Activated CD4-positive, alpha-beta memory T cell treated with anti-CD3 and anti-CD28 coated beads, Interleukin-2, amount 10 ng/mL, durations not matched to agents 7 days and 5 days (primary cell): ENCODE measurements at regions of chr1 and their contacts with region 1.

Region 1: DNA sequence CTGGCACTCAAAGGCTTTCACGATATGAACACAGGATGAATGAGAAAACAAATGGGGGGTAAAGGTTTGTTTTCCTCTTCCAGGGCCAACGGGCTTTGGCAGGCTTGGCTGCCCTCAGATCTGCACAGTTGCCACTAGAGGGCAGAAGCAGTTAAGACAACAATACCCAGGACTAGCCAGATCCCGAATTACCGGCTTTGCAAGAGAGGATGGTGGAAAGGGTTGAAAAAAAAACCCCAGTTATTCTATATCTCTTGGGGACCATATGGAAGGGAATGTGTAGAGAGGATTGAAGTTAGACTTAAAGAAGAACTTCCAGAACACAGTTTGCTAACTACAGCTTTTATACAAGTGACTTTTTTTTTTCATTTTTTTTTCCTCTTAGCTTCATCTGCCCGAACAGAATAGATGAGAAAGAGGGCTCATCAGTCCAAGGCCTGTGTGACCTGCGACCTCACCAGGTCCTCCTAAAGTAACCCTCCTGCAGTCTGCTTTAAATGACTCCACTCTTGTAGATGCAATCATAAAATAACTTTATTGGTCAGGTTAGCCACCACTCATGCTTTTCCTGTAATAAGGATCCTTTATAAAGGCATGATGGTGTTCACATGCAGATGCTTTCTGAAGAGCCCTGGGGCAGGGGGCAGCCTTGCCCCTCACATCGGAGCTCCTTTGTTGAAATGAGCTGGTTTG is 10.7 kb downstream of the FMOD start:
- DNase-seq: peak; percentile 64
- H3K4me3 Mint-ChIP-seq: no peak overlapping the region
- H3K27ac Mint-ChIP-seq: no peak overlapping the region
- H3K4me1 Mint-ChIP-seq: peaks cover 25% of the 10 kb centered on the region
- H3K27me3 Mint-ChIP-seq: peaks cover 50% of the 10 kb centered on the region

Region 2: DNA sequence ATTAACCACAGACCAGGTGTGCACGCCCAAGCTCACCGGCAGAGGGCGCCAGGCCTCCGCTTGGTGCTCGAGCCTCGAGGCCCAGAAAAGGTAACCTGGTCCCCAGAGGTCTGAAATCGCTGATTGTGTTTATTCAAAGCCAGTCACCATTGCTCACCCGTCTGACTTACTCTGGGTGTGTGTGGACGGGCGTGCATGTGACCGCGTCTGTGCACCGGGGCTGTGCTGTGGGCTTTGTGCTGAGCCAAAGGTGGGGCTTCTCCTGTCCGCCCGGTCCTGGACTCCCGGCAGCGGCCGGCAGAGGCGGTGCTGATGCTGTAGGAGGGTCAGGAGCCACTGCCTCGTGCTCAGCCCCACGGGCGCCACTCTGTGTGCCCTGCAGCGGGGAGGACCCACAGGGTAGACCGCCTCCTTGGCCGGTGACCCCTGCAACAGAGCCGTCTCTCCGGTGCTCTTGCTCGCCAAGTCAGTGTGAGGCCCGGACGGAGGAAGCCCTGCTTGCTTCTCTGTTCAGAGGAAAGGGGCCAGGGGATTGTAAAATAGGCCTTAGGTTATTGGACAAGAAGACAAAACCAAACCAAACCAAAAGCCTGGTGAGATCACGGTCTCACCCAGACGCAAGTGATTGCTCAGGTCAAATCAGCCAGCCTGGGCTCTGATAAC is 66.9 kb before region 1 on chr1:
- CTCF ChIA-PET with region 1: interaction called, 512 read pairs
- POLR2A ChIA-PET with region 1: interaction called, 12 read pairs
- DNase-seq: peak; percentile 93
- H3K4me3 Mint-ChIP-seq: peak overlapping the region; percentile 38
- H3K27ac Mint-ChIP-seq: peak overlapping the region; percentile 49
- H3K4me1 Mint-ChIP-seq: peaks cover 65% of the 10 kb centered on the region
- H3K27me3 Mint-ChIP-seq: no peaks in the 10 kb centered on the region

Region 3: DNA sequence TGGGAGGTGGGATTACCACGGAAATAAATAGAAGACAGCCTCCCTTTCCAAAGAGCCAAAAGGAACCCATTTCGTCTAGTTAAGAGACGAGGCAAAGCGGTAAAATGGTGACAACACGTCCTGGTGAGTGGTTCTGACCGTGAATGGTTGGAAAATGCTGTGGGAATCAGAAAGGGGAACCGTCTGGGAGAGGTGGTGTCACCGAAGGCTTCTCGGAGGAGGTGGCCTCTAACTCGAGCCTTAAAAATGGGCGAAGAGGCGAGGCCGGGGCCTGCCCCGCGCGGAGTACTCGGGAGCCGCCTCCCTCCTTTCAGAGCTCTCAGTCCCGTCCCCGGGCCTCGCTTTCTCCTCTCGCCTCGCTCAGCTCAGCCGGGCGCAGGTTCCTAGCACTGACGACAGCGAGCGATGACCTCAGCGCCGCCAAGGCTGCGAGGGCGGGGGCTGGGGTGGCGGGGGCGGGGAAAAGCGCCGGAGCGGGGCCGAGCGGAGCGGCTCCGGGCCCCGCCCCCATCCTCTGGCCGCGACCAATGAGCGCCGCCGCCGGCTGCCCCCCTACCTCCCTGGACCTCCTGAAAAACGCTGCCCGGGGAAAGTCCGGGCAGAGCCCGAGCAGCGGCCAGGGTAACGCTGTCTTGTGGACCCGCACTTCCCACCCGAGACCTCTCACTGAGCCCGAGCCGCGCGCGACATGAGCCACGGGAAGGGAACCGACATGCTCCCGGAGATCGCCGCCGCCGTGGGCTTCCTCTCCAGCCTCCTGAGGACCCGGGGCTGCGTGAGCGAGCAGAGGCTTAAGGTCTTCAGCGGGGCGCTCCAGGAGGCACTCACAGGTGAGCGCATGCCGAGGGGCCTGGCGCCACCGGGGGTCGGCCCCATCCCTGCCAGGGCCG is 35.1 kb before region 1 on chr1 and contains the start of gene BTG2:
- CTCF ChIA-PET with region 1: interaction called, 99 read pairs
- POLR2A ChIA-PET with region 1: interaction called, 35 read pairs
- DNase-seq: peak; percentile 93
- H3K4me3 Mint-ChIP-seq: peak within 1 kb of the TSS; percentile 98
- H3K27ac Mint-ChIP-seq: peak within 1 kb of the TSS; percentile 92
- H3K4me1 Mint-ChIP-seq: peaks cover 68% of the 10 kb centered on the region
- H3K27me3 Mint-ChIP-seq: no peaks in the 10 kb centered on the region
- total RNA-seq, gene BTG2: 116 TPM

Region 4: DNA sequence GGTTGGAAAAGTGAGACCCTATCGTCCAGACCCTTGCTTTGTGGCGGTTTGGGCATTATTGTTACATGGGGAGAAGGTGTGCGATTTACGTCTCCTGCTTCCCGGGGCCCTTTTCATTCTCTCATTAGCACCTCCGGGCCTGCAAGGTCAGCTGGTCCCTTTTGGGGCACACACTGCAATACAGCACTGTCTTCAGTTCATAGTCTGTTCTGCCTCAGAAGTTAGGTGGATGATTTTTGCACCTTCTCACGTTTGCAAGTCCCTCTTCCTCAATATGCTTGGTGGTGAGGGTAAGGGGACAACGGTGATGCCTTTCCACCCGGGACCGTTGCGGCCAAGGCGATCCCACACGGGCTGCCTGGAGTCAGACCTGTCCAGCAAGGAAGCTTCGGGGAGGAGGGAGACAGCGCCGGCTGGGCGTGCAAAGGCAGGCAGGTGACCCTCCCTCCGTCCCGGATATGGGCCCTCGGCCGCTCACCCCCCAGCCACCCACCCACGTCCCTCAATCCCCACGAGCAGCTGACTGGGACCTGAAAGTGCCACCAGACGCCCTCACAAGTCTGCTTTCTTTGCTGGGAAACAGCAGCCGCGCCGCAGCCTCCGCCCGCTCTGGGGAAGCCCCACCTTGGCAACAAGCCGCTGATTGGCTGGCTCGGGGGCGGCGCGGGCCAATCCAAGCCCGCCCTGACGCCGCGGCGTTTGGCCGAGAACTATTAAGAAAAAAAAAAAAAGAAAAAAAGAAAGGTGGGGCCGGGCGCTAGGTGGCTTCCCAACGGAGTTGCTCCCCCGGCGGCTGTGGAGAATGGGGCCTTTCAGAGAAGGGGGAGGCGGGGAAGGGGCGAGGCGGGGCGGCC is 13.2 kb before region 1 on chr1:
- CTCF ChIA-PET with region 1: interaction called, 76 read pairs
- POLR2A ChIA-PET with region 1: interaction called, 48 read pairs
- DNase-seq: peak; percentile 95
- H3K4me3 Mint-ChIP-seq: peak overlapping the region; percentile 75
- H3K27ac Mint-ChIP-seq: peak overlapping the region; percentile 95
- H3K4me1 Mint-ChIP-seq: peaks cover 65% of the 10 kb centered on the region
- H3K27me3 Mint-ChIP-seq: no peaks in the 10 kb centered on the region

Region 5: GRCh38 chr1:203395751-203396150 is 55.5 kb after region 1 on chr1:
- CTCF ChIA-PET with region 1: no interaction called
- POLR2A ChIA-PET with region 1: no interaction called
- DNase-seq: no peak
- H3K4me3 Mint-ChIP-seq: no peak overlapping the region
- H3K27ac Mint-ChIP-seq: no peak overlapping the region
- H3K4me1 Mint-ChIP-seq: no peaks in the 10 kb centered on the region
- H3K27me3 Mint-ChIP-seq: peaks cover 42% of the 10 kb centered on the region

Region 6: GRCh38 chr1:203428981-203429599 is 88.8 kb after region 1 on chr1:
- CTCF ChIA-PET with region 1: no interaction called
- POLR2A ChIA-PET with region 1: no interaction called
- DNase-seq: no peak
- H3K4me3 Mint-ChIP-seq: no peak overlapping the region
- H3K27ac Mint-ChIP-seq: no peak overlapping the region
- H3K4me1 Mint-ChIP-seq: no peaks in the 10 kb centered on the region
- H3K27me3 Mint-ChIP-seq: peaks cover 52% of the 10 kb centered on the region

Region 7: DNA sequence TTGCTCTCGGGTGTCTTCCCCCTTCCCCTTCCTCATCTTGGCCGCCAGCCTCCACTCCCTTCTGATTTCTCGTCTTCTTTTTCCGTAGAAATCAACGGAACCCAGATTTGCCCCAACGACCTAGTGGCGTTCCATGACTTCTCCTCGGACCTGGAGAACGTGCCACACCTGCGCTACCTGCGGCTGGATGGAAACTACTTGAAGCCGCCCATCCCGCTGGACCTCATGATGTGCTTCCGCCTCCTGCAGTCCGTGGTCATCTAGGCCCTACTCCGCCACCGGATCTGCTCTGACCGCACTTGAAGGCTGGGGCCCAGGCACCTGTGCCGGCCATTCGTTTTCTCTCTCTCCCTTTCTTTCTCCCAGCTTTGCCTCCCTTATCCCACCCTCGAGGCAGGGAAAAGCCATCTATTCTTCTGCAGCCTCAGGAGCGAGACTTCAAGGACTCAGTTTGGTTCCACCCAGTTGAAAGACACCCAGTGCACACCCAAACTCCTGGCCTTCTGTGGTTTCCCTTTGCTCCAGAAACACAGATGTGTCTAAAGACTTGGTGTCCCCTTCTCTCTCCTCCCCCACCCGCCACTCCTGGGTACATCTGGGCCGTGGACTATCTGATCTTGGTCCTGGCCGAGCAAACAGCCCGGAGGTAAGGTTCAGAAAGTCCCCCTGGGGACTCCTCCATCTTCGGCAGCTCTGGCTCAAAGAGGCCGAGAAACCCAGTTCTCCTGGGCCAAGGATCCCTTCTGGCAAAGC is 146.5 kb after region 1 on chr1:
- CTCF ChIA-PET with region 1: interaction called, 132 read pairs
- POLR2A ChIA-PET with region 1: no interaction called
- DNase-seq: no peak
- H3K4me3 Mint-ChIP-seq: peak overlapping the region; percentile 57
- H3K27ac Mint-ChIP-seq: peak overlapping the region; percentile 46
- H3K4me1 Mint-ChIP-seq: peaks cover 9% of the 10 kb centered on the region
- H3K27me3 Mint-ChIP-seq: peaks cover 9% of the 10 kb centered on the region

Region 8: GRCh38 chr1:203500271-203500661 is 160.0 kb after region 1 on chr1:
- CTCF ChIA-PET with region 1: no interaction called
- POLR2A ChIA-PET with region 1: no interaction called
- DNase-seq: no peak
- H3K4me3 Mint-ChIP-seq: no peak overlapping the region
- H3K27ac Mint-ChIP-seq: no peak overlapping the region
- H3K4me1 Mint-ChIP-seq: no peaks in the 10 kb centered on the region
- H3K27me3 Mint-ChIP-seq: peaks cover 15% of the 10 kb centered on the region

Region 9: DNA sequence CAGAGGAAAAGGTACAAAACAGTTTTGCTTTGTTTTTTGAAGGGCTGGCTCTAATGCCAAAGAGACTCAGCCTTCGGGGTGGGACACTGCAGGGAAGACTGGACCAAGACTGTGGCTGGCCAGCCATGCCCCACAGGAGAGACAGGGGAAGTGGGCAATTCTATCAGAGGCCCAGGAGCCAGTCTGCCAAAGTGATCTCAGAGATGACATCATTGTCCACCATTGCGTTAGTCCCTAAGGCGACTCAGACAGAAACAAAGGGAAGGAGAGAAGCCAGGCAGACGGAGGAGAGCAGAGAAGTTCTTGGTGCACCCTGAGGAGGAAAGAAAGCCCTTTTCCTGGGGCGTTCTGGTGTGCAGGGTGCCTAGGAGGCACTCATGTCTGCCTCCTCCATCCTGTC is 180.1 kb after region 1 on chr1:
- CTCF ChIA-PET with region 1: no interaction called
- POLR2A ChIA-PET with region 1: no interaction called
- DNase-seq: no peak
- H3K4me3 Mint-ChIP-seq: no peak overlapping the region
- H3K27ac Mint-ChIP-seq: no peak overlapping the region
- H3K4me1 Mint-ChIP-seq: no peaks in the 10 kb centered on the region
- H3K27me3 Mint-ChIP-seq: peaks cover 3% of the 10 kb centered on the region